Psoas muscle (tissue), 8 donors: ENCODE measurements at regions of chr3 and their contacts with region 1.

Region 1: DNA sequence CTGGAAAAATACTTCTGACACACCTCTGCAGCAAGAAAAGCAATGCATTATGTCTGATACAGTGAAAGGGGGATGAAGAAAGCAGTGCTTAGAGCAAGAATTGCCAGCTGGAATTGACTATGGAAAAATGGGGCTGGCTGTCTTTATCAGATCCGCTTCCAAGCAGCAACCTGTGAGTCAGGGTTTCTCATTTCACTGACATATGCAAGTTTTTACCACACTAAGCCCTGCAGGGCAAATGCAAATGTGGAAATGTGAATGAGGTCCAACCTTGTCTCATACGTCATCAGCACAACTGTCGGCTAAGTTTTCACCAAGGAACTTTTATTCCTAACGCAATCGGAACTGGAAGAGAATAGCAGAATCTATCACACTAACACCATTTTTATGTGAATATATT is 172.5 kb upstream of the GADL1 start:
- DNase-seq: no peak
- ATAC-seq: peak; percentile 97 to 99 (median 99)
- H3K4me3 ChIP-seq: peak overlapping the region; percentile 41
- H3K27ac ChIP-seq: peak overlapping the region; percentile 26
- H3K4me1 ChIP-seq: no peaks in the 10 kb centered on the region
- H3K27me3 ChIP-seq: no peaks in the 10 kb centered on the region
- CTCF ChIP-seq: no peak

Region 2: GRCh38 chr3:30779686-30780287 is 287.2 kb before region 1 on chr3:
- intact Hi-C with region 1: loop called in 1 of 2 experiments (anchors 10 kb)
- DNase-seq: no peak
- ATAC-seq: peak in 3 of 4 donors; percentile 65 to 83 (median 79)
- H3K4me3 ChIP-seq: no peak overlapping the region
- H3K27ac ChIP-seq: no peak overlapping the region
- H3K4me1 ChIP-seq: no peaks in the 10 kb centered on the region
- H3K27me3 ChIP-seq: no peaks in the 10 kb centered on the region
- CTCF ChIP-seq: peak; percentile 56

Region 3: GRCh38 chr3:31029706-31030105 is 37.3 kb before region 1 on chr3:
- intact Hi-C with region 1: no loop called
- DNase-seq: no peak
- ATAC-seq: no peak
- H3K4me3 ChIP-seq: no peak overlapping the region
- H3K27ac ChIP-seq: no peak overlapping the region
- H3K4me1 ChIP-seq: no peaks in the 10 kb centered on the region
- H3K27me3 ChIP-seq: no peaks in the 10 kb centered on the region
- CTCF ChIP-seq: no peak